OCI-LY7 (cell line): ENCODE measurements at regions of chr2 and their contacts with region 1.

Region 1: GRCh38 chr2:181341855-181342600 is 115.2 kb upstream of the ITGA4 start:
- DNase-seq: no peak
- H3K4me3 ChIP-seq: no peak overlapping the region
- H3K27ac ChIP-seq: no peak overlapping the region
- H3K4me1 ChIP-seq: no peaks in the 10 kb centered on the region
- CTCF ChIP-seq: no peak

Region 2: GRCh38 chr2:181319286-181319685 is 22.7 kb before region 1 on chr2:
- CTCF ChIA-PET with region 1: no interaction called
- POLR2A ChIA-PET with region 1: interaction called, 18 read pairs
- intact Hi-C with region 1: no loop called
- DNase-seq: no peak
- H3K4me3 ChIP-seq: no peak overlapping the region
- H3K27ac ChIP-seq: no peak overlapping the region
- H3K4me1 ChIP-seq: peaks cover 4% of the 10 kb centered on the region
- CTCF ChIP-seq: no peak

Region 3: DNA sequence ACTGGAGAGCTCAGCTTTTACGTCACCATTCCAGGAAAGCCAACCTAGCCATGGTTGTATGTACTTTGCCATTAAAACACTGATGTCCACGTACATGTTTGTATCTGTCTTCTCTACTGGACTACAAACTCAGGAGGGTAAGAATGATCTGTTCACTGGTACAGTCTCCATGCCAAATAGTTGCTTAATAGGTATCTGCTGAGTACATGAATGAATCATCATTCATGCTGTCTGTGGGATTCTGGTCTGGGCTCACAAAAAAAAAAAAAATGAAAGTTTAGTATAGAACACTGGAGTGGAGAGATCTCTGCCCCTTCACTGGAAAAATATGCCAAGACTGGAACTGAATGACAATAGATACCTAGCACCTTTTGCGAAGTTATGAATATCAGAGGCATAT is 12.6 kb after region 1 on chr2:
- CTCF ChIA-PET with region 1: no interaction called
- POLR2A ChIA-PET with region 1: interaction called, 20 read pairs
- intact Hi-C with region 1: no loop called
- DNase-seq: no peak
- H3K4me3 ChIP-seq: no peak overlapping the region
- H3K27ac ChIP-seq: no peak overlapping the region
- H3K4me1 ChIP-seq: peaks cover 12% of the 10 kb centered on the region
- CTCF ChIP-seq: no peak